A673 (cell line): ENCODE measurements at regions of chr6 and their contacts with region 1.

Region 1: DNA sequence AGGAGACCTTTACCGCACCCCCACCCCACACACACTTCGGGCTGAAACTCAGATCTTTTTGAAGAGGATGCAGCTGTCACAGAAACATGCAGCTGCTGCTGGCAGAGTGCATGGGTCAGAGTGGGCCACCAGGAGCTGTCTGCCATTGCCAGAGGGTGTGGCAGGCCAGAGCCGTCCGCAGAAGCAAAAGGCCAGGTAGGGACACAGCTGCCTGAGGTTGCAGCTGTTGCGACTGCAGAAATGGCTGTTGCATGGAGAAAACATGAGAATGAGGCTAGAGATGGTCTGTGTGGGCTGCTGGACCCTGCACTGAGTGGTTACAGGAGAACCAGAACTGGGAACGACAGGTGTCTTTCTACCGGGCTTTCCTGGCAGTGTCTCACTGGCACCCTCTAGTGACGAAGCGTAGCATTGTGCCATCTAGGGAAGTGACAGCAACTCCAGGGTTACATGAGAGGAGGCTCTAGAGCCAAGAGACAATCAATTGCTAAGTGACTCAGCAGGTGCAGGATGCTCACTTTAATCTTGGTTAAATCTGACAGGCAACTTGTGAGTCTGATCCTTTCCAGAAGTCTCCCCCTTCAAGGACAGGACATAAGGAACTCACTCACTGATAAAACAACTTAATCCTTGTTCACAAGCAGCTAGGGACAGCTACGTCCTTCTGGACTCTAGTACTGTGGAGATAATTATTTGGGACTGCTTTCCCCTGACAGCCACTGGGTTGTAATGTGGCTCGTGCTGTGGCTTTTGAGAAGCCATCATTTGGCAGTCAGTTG is 29.1 kb upstream of the SERPINB9 start:
- DNase-seq: peak; percentile 88
- H3K4me3 ChIP-seq: no peak overlapping the region
- H3K27ac ChIP-seq: no peak overlapping the region
- H3K4me1 ChIP-seq: no peaks in the 10 kb centered on the region
- H3K27me3 ChIP-seq: no peaks in the 10 kb centered on the region
- CTCF ChIP-seq: peak; percentile 98

Region 2: DNA sequence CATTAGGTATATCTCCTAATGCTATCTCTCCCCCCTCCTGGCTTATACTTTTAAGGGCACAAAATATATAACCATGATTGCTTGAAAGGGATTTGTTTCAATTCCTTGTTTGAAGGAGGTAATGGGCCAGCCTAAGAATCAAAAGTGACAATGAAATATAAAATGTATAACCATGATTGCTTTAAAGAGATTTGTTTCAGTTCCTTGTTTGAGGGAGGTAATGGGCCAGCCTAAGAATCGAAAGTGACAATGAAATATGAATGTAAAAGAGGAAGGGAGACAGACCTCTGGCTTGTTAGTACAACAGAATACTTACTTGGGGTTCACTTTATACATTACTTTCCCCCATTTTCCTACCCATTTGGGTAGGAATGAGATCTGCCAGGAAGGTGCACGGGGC is 1266.9 kb before region 1 on chr6:
- CTCF ChIA-PET with region 1: no interaction called
- POLR2A ChIA-PET with region 1: no interaction called
- intact Hi-C with region 1: no loop called
- DNase-seq: no peak
- H3K4me3 ChIP-seq: no peak overlapping the region
- H3K27ac ChIP-seq: no peak overlapping the region
- H3K4me1 ChIP-seq: no peaks in the 10 kb centered on the region
- H3K27me3 ChIP-seq: no peaks in the 10 kb centered on the region
- CTCF ChIP-seq: no peak

Region 3: DNA sequence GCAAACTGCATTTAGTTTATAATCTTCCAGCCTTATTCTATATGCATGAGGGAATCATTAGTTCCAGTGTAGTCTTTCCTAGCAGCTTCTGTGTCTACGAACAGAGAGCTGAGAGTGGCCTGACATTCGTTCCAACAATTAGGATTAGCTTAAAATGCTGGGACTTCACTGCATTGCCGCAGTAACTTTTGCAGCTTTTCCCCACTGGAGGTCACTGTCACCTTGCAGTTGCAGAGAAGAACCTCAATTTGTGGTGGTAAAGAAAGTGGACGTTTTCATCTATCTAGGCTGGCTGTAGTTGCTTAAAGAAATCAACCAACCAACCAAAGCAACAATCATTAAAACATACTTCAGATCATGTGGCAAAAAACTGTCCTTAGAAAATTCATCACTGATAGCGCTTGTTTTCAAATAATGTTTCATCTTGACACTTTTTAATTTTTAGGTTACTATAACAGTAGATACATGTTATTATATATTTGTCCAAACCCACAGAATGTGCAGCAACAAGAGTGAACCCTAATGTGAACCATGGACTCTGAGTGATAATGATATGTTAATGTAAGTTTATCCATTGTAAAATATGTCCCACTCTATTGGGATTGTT is 193.7 kb before region 1 on chr6:
- CTCF ChIA-PET with region 1: interaction called, 4 read pairs
- POLR2A ChIA-PET with region 1: no interaction called
- intact Hi-C with region 1: loop called (anchors 5 kb)
- DNase-seq: peak; percentile 88
- H3K4me3 ChIP-seq: no peak overlapping the region
- H3K27ac ChIP-seq: no peak overlapping the region
- H3K4me1 ChIP-seq: no peaks in the 10 kb centered on the region
- H3K27me3 ChIP-seq: no peaks in the 10 kb centered on the region
- CTCF ChIP-seq: peak; percentile 91

Region 4: GRCh38 chr6:2791124-2791974 is 140.8 kb before region 1 on chr6:
- CTCF ChIA-PET with region 1: interaction called, 21 read pairs
- POLR2A ChIA-PET with region 1: no interaction called
- intact Hi-C with region 1: loop called (anchors 2 kb)
- DNase-seq: peak; percentile 78
- H3K4me3 ChIP-seq: no peak overlapping the region
- H3K27ac ChIP-seq: no peak overlapping the region
- H3K4me1 ChIP-seq: peaks cover 17% of the 10 kb centered on the region
- H3K27me3 ChIP-seq: no peaks in the 10 kb centered on the region
- CTCF ChIP-seq: peak; percentile 87